BJ (cell line): ENCODE measurements at regions of chr21 and their contacts with region 1.

Region 1: DNA sequence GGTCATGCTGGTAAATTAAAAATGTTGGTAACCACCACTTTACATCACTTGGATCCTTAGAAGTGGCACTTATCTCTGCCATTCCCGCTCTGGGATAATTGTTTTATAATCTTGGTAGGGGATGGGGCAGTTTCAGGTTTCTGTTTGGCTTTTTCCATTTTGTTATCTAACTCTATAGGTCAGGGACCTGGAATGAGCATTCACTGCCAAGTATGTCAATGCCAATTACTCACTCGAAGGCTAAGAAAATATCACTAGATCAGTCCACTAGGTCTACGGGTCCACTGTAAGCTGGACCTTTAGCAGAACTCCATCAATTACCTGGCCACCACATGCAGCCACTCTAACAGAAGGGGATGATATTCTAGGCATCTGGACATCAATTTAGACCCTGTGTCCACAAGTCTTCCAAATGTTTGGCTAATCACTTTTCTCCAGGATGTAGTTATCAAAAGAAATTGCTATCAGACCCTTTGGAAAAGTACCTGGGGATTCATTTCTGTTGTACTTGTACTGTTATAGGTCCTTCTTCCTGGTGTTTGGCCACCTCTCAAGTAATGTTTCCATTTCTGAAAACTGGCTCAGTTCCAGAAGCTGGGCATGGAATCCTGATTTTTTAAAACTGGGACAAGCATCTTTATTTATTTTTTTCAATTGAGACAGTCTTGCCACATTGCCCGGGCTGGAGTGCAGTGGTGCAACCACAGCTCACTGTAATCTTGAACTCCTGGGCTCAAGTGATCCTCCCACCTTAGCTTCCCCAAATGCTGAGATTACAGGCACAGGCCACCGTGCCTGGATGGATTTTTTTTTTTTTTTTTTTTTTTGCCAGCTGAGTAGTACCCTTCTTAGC is 4.3 kb upstream of the DIP2A start:
- DNase-seq: no peak
- H3K4me3 ChIP-seq: no peak overlapping the region
- H3K27me3 ChIP-seq: no peaks in the 10 kb centered on the region
- CTCF ChIP-seq: no peak

Region 2: GRCh38 chr21:46515109-46515508 is 60.7 kb after region 1 on chr21:
- CTCF ChIA-PET with region 1: no interaction called
- POLR2A ChIA-PET with region 1: interaction called, 15 read pairs
- DNase-seq: no peak
- H3K4me3 ChIP-seq: no peak overlapping the region
- H3K27me3 ChIP-seq: no peaks in the 10 kb centered on the region
- CTCF ChIP-seq: no peak